ENCODE measurements at regions of chr14 and their contacts with region 1.

Region 1: DNA sequence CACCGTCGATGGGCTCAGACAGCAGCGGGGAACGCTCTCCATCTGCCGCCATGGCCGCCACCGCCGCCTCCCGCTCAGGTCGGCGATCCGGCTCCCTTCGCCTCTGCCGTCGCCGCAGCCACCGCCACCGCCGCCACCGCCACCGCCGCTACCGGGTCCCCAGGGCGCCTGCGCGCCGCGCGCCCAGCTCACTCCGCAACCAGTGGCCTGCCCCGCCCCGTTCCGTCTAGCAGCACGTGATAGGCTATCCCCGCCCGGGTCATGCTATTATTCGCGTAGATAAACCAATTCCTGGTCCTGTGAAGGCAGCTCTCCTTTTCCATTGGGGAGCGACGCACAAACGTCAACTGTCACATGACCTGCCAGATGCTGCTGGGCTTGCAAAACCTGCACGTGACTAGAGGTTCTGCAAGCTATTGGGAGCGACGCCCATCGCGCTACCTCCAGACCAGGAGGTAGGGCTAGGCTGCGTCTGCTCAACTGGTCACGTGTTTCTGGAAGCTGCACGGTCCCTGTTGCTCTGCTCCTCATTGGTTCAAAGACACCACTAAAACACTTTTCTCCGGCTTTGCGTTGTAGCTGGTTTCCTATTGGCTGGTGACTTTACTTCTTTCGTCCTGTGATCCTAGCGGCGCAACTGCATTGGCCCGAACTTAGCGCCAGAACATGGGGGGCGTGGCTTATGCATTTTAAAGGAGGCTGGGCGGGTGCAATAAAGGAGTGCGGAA is at the start of gene PIP4P1:
- DNase-seq: peak; percentile 100
- H3K4me3 ChIP-seq: peak within 1 kb of the TSS; percentile 78 to 95 (median 86)
- H3K27ac ChIP-seq: peak within 1 kb of the TSS; percentile 92 to 99 (median 98)
- H3K4me1 ChIP-seq: peaks cover 22 to 64% (median 50%) of the 10 kb centered on the region in 6 donors
- H3K27me3 ChIP-seq: no peaks in the 10 kb centered on the region
- CTCF ChIP-seq: peak in 4 of 11 experiments; percentile 12 to 38 (median 19)
- POLR2A ChIP-seq: peak in 2 of 3 donors; percentile 71 to 84
- total RNA-seq, gene PIP4P1: 32.5 to 45.6 (median 38.4) TPM

Region 2: DNA sequence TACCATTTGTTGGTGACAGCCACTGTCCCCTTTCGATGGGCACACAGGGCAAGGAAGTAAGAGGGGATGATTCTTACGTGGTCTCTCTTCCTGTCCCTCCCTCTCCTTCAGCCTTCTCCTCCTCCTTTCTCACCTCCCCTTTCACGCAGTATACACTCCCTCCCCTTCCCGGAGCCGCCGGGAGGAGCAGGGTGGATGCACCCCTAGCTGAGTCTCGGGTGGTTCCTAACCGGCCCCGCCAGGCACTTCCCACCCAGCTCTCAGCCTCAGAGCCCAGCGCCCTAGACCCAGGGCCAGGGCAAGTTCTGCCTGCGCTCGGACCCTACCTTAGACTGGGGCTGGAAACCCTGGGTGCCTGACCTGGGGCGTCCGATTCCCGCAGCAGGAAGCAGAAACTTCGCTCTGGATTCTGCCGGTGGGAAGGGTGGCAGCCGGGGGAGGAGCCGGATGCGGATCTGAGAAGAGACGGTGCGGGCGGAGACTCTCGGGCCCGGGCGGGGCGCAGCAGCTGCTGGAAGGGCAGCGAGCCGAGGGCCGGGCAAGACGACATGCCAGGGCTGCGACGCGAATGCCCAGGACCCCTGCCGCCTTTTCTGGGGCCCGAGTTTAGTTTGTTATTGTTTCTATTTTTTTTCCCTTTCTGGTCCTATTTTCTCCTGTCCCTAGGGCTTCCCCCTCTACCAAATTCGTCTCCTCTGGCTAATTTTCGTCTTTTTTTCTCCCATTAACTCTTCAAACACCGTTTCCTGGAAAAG is 48.2 kb before region 1 on chr14 and contains the start of gene TEP1:
- intact Hi-C with region 1: loop called (anchors 10 kb)
- DNase-seq: peak; percentile 96
- H3K4me3 ChIP-seq: peak within 1 kb of the TSS; percentile 66 to 91 (median 76)
- H3K27ac ChIP-seq: peak within 1 kb of the TSS; percentile 85 to 99 (median 96)
- H3K4me1 ChIP-seq: peaks cover 13 to 61% (median 43%) of the 10 kb centered on the region in 6 donors
- H3K27me3 ChIP-seq: no peaks in the 10 kb centered on the region
- CTCF ChIP-seq: no peak
- POLR2A ChIP-seq: peak in 1 of 3 donors; percentile 62
- total RNA-seq, gene TEP1: 55.1 to 91.7 (median 70.5) TPM

Measured in spleen (tissue), 13 donors.